Activated naive CD4-positive, alpha-beta T cell treated with anti-CD3 and anti-CD28 coated beads, Interleukin-2, amount 10 ng/mL, durations not matched to agents 7 days and 5 days (primary cell): ENCODE measurements at regions of chr5 and their contacts with region 1.

Region 1: DNA sequence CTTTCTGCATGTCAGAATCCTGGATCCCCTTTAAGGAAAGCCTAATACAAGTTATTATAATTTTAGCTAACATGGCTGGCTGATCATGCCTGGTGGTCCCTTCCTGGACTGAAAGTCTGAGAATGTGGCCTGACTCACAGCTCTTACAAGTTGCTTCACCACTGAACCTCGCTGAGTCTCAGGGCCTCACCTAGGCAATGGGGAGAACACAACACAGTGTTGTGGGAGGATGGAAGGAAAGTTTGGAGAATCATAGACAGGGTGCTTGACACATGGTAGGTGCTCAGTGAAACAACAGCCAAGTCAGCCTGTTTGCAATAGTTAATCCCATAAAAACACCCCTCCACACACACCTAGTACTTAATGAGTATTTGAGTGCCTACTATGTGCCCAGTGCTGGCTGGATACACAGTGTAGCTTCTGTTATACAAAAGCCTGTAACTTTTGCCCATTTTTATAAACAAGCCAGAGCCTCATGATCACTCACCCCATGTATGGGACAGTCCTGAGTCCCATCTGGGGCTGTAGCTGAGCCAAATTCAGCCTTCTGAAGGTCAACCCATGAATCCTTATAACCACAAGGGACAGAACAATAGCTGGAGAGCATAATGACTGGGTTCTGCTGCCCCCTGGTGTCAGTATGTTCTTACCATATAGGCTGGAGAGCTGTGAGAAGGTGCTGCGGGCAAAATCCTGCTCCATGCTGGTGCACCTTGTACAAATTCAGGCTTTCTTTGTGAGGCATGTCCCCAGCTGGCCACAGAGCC is 3.9 kb downstream of the ACSL6 start:
- DNase-seq: peak; percentile 87
- H3K4me3 Mint-ChIP-seq: no peak overlapping the region
- H3K27ac Mint-ChIP-seq: no peak overlapping the region
- H3K4me1 Mint-ChIP-seq: peaks cover 30% of the 10 kb centered on the region
- H3K27me3 Mint-ChIP-seq: peaks cover 76% of the 10 kb centered on the region

Region 2: GRCh38 chr5:131423056-131423455 is 584.5 kb before region 1 on chr5:
- CTCF ChIA-PET with region 1: interaction called, 19 read pairs
- DNase-seq: no peak
- H3K4me3 Mint-ChIP-seq: no peak overlapping the region
- H3K27ac Mint-ChIP-seq: no peak overlapping the region
- H3K4me1 Mint-ChIP-seq: no peaks in the 10 kb centered on the region
- H3K27me3 Mint-ChIP-seq: no peaks in the 10 kb centered on the region

Region 3: DNA sequence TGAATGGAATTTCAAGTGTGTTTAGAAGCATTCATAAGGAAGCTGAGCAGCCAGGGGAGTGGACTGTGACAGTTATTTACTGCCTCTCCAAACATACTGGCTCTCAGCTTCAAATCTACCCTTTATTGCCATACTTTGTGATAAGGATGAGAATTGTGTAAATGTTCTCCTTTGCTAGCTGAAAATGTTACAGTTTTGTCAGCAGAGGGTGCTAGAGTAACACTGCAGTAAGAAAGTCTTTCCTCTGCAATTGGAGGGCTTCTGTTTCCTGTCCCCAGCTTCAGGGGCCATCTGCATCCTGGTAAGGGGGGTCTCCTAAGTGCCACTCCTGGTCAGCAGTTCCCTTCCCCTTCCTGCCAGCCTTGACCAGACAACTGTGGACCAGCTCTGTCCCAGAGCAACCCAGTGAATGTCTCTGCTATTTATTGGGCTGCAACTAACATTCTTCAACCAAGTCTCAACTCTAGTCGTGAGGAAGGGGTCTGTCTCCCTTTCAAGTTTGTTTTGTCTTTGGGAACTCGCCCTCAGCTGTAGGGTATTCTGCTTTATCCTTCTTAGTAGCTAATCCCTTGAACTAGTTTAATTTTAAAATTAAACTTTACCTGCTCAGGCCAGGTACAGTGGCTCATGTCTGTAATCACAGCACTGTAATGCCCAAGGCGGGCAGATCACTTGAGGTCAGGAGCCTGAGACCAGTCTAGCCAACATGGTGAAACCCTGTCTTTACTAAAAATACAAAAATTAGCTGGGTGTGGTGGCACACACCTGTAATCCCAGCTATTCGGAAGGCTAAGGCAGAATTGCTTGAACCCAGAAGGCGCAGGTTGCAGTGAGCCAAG is 417.9 kb before region 1 on chr5:
- CTCF ChIA-PET with region 1: interaction called, 211 read pairs
- DNase-seq: peak; percentile 33
- H3K4me3 Mint-ChIP-seq: no peak overlapping the region
- H3K27ac Mint-ChIP-seq: no peak overlapping the region
- H3K4me1 Mint-ChIP-seq: peaks cover 35% of the 10 kb centered on the region
- H3K27me3 Mint-ChIP-seq: no peaks in the 10 kb centered on the region

Region 4: GRCh38 chr5:131796793-131797693 is 210.5 kb before region 1 on chr5 and contains the start of gene FNIP1:
- CTCF ChIA-PET with region 1: interaction called, 13 read pairs
- DNase-seq: peak; percentile 99
- H3K4me3 Mint-ChIP-seq: peak within 1 kb of the TSS; percentile 98
- H3K27ac Mint-ChIP-seq: peak within 1 kb of the TSS; percentile 95
- H3K4me1 Mint-ChIP-seq: peaks cover 32% of the 10 kb centered on the region
- H3K27me3 Mint-ChIP-seq: peaks cover 11% of the 10 kb centered on the region

Region 5: DNA sequence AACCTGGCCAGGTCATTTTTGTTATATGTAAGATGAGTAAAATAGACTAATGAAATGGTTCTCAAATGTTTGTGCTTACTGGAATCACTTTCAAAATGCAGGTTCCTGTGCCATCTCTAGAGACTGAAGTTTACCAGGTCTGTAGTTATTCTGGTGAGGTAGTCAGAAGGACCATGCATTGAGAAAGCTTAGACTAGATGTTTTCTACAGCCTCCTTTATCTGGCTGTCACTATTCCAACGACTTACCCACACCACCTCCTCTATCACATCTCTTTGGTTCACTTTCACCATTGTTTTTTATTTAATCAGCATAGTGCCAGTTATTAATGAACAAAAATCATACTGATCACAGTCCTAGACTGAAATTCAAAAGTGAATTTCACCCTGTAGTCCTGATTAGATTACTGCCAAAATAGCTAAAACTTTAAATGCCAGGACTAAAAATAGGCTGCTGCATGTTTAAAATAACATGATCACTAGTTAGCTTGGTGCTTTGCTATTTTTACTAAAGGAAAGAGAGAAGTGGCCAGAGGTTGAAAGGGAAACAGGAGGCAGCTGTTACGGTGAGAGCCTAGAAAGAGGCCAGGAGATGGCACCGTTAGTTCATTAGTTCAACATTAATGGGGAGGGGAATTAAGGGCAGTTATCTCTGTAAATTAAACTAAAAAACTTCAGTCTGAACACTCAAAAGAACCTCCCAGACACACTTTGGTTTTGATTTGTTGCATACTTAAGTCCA is 196.9 kb before region 1 on chr5:
- CTCF ChIA-PET with region 1: interaction called, 98 read pairs
- DNase-seq: peak; percentile 27
- H3K4me3 Mint-ChIP-seq: no peak overlapping the region
- H3K27ac Mint-ChIP-seq: no peak overlapping the region
- H3K4me1 Mint-ChIP-seq: peaks cover 3% of the 10 kb centered on the region
- H3K27me3 Mint-ChIP-seq: peaks cover 5% of the 10 kb centered on the region

Region 6: DNA sequence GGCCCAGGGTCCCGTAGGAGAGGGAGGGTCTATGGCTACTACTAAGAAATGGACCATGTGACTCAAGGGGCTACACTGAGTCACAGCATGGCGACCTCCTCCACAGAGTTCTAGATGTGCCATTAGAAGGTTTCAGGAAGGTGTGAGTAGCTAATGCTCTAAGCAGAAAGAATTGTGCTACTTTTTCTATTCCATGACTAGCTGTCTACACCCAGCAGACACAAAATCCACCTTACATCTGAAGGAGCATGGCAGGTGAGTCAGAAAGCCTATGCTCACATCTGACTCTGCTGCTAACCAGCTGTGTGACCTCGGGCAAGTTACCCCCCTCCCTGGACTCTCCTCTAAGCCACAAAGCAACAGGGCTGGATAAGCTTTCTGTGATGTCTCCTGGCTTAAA is 47.7 kb before region 1 on chr5:
- CTCF ChIA-PET with region 1: no interaction called
- DNase-seq: no peak
- H3K4me3 Mint-ChIP-seq: no peak overlapping the region
- H3K27ac Mint-ChIP-seq: no peak overlapping the region
- H3K4me1 Mint-ChIP-seq: no peaks in the 10 kb centered on the region
- H3K27me3 Mint-ChIP-seq: peaks cover 3% of the 10 kb centered on the region

Region 7: DNA sequence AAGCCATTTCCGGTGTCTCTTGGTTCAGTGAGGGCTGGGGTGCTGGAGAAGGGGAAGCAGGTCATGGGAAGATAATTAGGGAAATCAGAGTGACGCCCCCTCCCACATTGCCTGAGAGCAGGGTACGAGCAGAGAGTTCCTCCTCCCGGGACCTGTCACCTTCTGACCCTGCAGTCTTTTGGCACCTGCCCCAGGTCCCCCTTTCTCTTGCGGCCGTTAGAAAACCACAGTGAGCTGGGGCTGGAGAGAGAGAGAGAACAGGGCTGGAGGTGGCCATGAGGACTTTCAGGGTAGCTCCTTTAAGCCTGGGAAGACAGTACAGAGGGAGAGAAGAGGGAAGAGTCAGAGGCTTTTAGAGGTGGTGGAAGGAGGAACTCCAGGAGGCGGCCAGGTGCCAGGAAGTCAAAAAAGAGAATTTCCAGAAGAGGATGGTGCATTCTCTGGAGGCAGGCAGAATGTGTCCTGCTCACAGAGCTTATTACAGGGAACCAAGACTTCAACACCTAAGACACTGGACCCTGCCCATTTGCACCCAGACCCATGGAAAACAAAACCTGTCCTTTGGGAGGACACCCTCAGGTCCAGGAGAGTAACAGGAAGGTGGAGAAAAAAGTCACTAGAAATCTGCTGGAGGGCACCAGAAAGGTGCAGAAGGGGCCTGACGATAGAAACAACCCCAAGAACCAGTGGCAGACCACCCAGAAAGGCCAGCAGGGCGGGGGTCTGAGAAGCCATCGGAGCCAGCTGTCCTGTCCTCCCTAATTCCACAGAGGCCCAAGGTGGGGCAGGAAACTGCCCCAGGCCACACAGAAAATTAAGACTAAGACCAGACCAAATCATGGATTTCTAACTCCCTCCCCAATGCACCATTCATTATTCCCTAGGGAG is 10.4 kb after region 1 on chr5:
- CTCF ChIA-PET with region 1: interaction called, 12 read pairs
- DNase-seq: no peak
- H3K4me3 Mint-ChIP-seq: no peak overlapping the region
- H3K27ac Mint-ChIP-seq: no peak overlapping the region
- H3K4me1 Mint-ChIP-seq: peaks cover 56% of the 10 kb centered on the region
- H3K27me3 Mint-ChIP-seq: peaks cover 57% of the 10 kb centered on the region

Region 8: GRCh38 chr5:132064738-132065331 is 57.3 kb after region 1 on chr5:
- CTCF ChIA-PET with region 1: interaction called, 64 read pairs
- DNase-seq: peak; percentile 87
- H3K4me3 Mint-ChIP-seq: no peak overlapping the region
- H3K27ac Mint-ChIP-seq: peak overlapping the region; percentile 26
- H3K4me1 Mint-ChIP-seq: peaks cover 19% of the 10 kb centered on the region
- H3K27me3 Mint-ChIP-seq: peaks cover 58% of the 10 kb centered on the region